HCT116 (cell line): ENCODE measurements at regions of chr4 and their contacts with region 1.

Region 1: GRCh38 chr4:102620697-102621497 is 119.7 kb downstream of the NFKB1 start:
- DNase-seq: peak; percentile 76
- ATAC-seq: peak; percentile 91
- H3K4me3 ChIP-seq: peak overlapping the region; percentile 28 to 42
- H3K27ac ChIP-seq: peak overlapping the region; percentile 36
- H3K4me1 ChIP-seq: peaks cover 17 to 30% of the 10 kb centered on the region in 2 experiments
- H3K27me3 ChIP-seq: no peaks in the 10 kb centered on the region
- CTCF ChIP-seq: peak; percentile 61 to 97 (median 81)
- POLR2A ChIP-seq: no peak
- RAD21 ChIP-seq: peak; percentile 97

Region 2: GRCh38 chr4:102500696-102501446 is 120.0 kb before region 1 on chr4 and contains the start of gene NFKB1:
- CTCF ChIA-PET with region 1: interaction called, 3 read pairs
- POLR2A ChIA-PET with region 1: no interaction called
- RAD21 ChIA-PET with region 1: interaction called in 1 of 2 experiments, 12 read pairs
- intact Hi-C with region 1: no loop called
- DNase-seq: no peak
- ATAC-seq: peak; percentile 59
- H3K4me3 ChIP-seq: peak within 1 kb of the TSS; percentile 54 to 70
- H3K27ac ChIP-seq: peak within 1 kb of the TSS; percentile 94
- H3K4me1 ChIP-seq: peaks cover 15 to 26% of the 10 kb centered on the region in 2 experiments
- H3K27me3 ChIP-seq: no peaks in the 10 kb centered on the region
- CTCF ChIP-seq: 0 out of 6 replicates have a peak, but pooled peaks of 1 of the 3 experiments have one; percentile 5
- POLR2A ChIP-seq: no peak
- RAD21 ChIP-seq: no peak
- total RNA-seq, gene NFKB1: 29.4 TPM

Region 3: DNA sequence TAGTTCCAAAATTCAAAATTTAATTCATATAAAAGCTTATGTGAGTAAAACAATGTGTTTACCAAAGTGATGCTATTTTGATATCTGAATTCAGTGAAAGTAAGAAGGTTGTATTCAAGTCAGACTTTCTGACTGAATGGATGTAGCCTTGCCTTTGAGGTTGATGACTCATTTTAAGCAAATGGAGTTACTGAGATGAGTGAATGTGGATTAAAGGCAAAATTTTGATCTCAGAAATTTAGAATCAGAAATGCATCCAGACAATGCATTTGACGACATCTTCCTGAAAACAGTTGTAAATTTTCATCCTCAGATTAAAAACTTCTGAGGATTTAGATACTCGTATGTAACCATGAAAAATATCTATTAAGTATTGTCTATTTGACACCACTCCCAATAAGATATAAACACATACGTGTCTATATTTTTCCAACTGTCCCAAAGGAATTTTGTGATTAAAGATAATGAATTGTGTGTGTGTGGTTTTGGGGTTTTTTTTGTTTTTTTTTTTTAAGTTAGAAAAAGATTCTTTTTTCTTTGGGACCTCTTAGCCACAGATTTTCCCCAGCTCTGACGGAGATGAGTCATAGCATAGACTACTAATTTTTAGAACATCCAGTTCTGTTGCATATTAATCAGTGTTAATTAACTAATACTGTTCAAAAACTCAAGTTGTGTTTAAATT is 85.4 kb before region 1 on chr4:
- CTCF ChIA-PET with region 1: no interaction called
- POLR2A ChIA-PET with region 1: no interaction called
- RAD21 ChIA-PET with region 1: no interaction called
- intact Hi-C with region 1: no loop called
- DNase-seq: no peak
- ATAC-seq: no peak
- H3K4me3 ChIP-seq: no peak overlapping the region
- H3K27ac ChIP-seq: no peak overlapping the region
- H3K4me1 ChIP-seq: peaks cover 0 to 6% of the 10 kb centered on the region in 2 experiments; a peak in 1 of 4 replicates
- H3K27me3 ChIP-seq: no peaks in the 10 kb centered on the region
- CTCF ChIP-seq: no peak
- POLR2A ChIP-seq: no peak
- RAD21 ChIP-seq: no peak

Region 4: GRCh38 chr4:102994803-102995202 is 373.9 kb after region 1 on chr4:
- CTCF ChIA-PET with region 1: no interaction called
- POLR2A ChIA-PET with region 1: no interaction called
- RAD21 ChIA-PET with region 1: no interaction called
- intact Hi-C with region 1: loop called (anchors 5 kb)
- DNase-seq: no peak
- ATAC-seq: no peak
- H3K4me3 ChIP-seq: no peak overlapping the region
- H3K27ac ChIP-seq: no peak overlapping the region
- H3K4me1 ChIP-seq: no peaks in the 10 kb centered on the region
- H3K27me3 ChIP-seq: no peaks in the 10 kb centered on the region
- CTCF ChIP-seq: no peak
- POLR2A ChIP-seq: no peak
- RAD21 ChIP-seq: no peak

Region 5: GRCh38 chr4:103032574-103032973 is 411.7 kb after region 1 on chr4:
- CTCF ChIA-PET with region 1: interaction called, 15 read pairs
- POLR2A ChIA-PET with region 1: no interaction called
- RAD21 ChIA-PET with region 1: interaction called, 3 to 7 read pairs
- intact Hi-C with region 1: no loop called
- DNase-seq: peak; percentile 24
- ATAC-seq: peak; percentile 98
- H3K4me3 ChIP-seq: no peak overlapping the region
- H3K27ac ChIP-seq: no peak overlapping the region
- H3K4me1 ChIP-seq: no peaks in the 10 kb centered on the region
- H3K27me3 ChIP-seq: no peaks in the 10 kb centered on the region
- CTCF ChIP-seq: peak; percentile 28 to 74 (median 73); a peak in 5 of 6 replicates
- POLR2A ChIP-seq: no peak
- RAD21 ChIP-seq: peak; percentile 65

Region 6: GRCh38 chr4:103099691-103100392 is 478.9 kb after region 1 on chr4 and contains the start of gene BDH2:
- CTCF ChIA-PET with region 1: interaction called, 23 read pairs
- POLR2A ChIA-PET with region 1: no interaction called
- RAD21 ChIA-PET with region 1: interaction called in 1 of 2 experiments, 3 read pairs
- intact Hi-C with region 1: no loop called
- DNase-seq: peak; percentile 79
- ATAC-seq: peak; percentile 94
- H3K4me3 ChIP-seq: peak within 1 kb of the TSS; percentile 11 to 42; a peak in 3 of 4 replicates
- H3K27ac ChIP-seq: no peak within 1 kb of the TSS
- H3K4me1 ChIP-seq: peaks cover 0 to 10% of the 10 kb centered on the region in 2 experiments; a peak in 2 of 4 replicates
- H3K27me3 ChIP-seq: no peaks in the 10 kb centered on the region
- CTCF ChIP-seq: peak; percentile 50 to 74 (median 72)
- POLR2A ChIP-seq: peak; percentile 51
- RAD21 ChIP-seq: peak; percentile 89
- total RNA-seq, gene BDH2: 5.0 TPM